ENCODE measurements at regions of chr3 and their contacts with region 1.

Region 1: GRCh38 chr3:120245386-120245785 is 39.6 kb downstream of the GPR156 start:
- DNase-seq: no peak
- H3K4me3 ChIP-seq: no peak overlapping the region
- H3K4me1 ChIP-seq: no peaks in the 10 kb centered on the region
- H3K27me3 ChIP-seq: peaks cover 11% of the 10 kb centered on the region; the same call in 1 of the 2 replicates

Region 2: GRCh38 chr3:119508172-119508845 is 737.1 kb before region 1 on chr3:
- in situ Hi-C with region 1: no loop called
- DNase-seq: no peak
- H3K4me3 ChIP-seq: no peak overlapping the region
- H3K4me1 ChIP-seq: no peaks in the 10 kb centered on the region
- H3K27me3 ChIP-seq: no peaks in the 10 kb centered on the region

Region 3: GRCh38 chr3:120404876-120405275 is 159.5 kb after region 1 on chr3:
- in situ Hi-C with region 1: loop called (anchors 10 kb)
- DNase-seq: no peak
- H3K4me3 ChIP-seq: no peak overlapping the region
- H3K4me1 ChIP-seq: no peaks in the 10 kb centered on the region
- H3K27me3 ChIP-seq: no peaks in the 10 kb centered on the region

Region 4: DNA sequence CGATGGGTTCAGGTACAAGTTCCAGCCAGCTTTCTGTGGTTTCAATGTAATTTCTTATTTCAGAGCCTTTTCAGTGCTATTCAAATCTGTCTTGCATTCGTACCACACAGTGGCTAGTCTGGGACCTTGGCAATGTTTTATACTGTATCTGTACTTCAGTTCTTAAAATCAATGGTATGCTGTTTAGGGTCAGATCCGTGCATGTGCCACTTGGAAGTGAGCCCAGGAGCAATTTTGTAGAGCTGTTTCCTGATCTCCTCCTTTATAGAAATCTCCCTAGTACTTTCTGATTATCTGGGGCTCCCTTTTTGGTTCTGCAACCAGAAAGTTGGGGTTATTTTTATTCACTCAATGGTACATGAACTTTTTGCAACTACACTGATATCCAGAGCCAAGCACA is 291.3 kb after region 1 on chr3:
- in situ Hi-C with region 1: no loop called
- DNase-seq: no peak
- H3K4me3 ChIP-seq: no peak overlapping the region
- H3K4me1 ChIP-seq: no peaks in the 10 kb centered on the region
- H3K27me3 ChIP-seq: no peaks in the 10 kb centered on the region

Measured in HAP-1 (cell line).